HEK293 (cell line): ENCODE measurements at regions of chr6 and their contacts with region 1.

Region 1: GRCh38 chr6:121319112-121319553 is 15.1 kb downstream of the TBC1D32 start:
- H3K4me3 ChIP-seq: peak overlapping the region; percentile 2; the same call in 1 of the 2 replicates
- H3K27ac ChIP-seq: no peak overlapping the region
- H3K4me1 ChIP-seq: no peaks in the 10 kb centered on the region
- CTCF ChIP-seq: no peak

Region 2: DNA sequence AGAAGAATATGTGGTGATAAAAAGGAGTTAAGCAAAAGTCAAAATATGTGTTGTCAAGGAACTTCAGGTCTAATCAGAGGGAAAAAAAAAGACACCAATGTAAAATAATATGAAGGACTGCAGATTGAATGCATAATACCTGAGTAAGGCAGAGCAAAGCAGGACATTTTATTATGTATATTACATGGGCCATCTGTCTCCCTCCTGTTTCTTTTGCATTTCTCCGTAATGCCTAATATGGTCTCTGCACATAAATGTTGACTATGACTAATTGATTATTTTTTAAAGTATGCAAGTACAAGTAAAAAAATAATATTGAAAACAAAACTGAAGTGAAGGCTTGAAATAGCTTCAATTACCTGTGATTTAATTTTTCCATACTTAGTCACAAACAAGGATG is 1584.9 kb before region 1 on chr6:
- CTCF ChIA-PET with region 1: interaction called, 10 read pairs
- POLR2A ChIA-PET with region 1: no interaction called
- H3K4me3 ChIP-seq: no peak overlapping the region
- H3K27ac ChIP-seq: no peak overlapping the region
- H3K4me1 ChIP-seq: no peaks in the 10 kb centered on the region
- CTCF ChIP-seq: no peak

Region 3: GRCh38 chr6:121305957-121306607 is 13.1 kb before region 1 on chr6:
- CTCF ChIA-PET with region 1: interaction called, 18 read pairs
- POLR2A ChIA-PET with region 1: no interaction called
- H3K4me3 ChIP-seq: no peak overlapping the region
- H3K27ac ChIP-seq: no peak overlapping the region
- H3K4me1 ChIP-seq: no peaks in the 10 kb centered on the region
- CTCF ChIP-seq: 0 out of 2 replicates have a peak, but pooled peaks have one; percentile 22

Region 4: GRCh38 chr6:121393731-121394505 is 74.8 kb after region 1 on chr6:
- CTCF ChIA-PET with region 1: interaction called, 19 read pairs
- POLR2A ChIA-PET with region 1: no interaction called
- H3K4me3 ChIP-seq: no peak overlapping the region
- H3K27ac ChIP-seq: no peak overlapping the region
- H3K4me1 ChIP-seq: no peaks in the 10 kb centered on the region
- CTCF ChIP-seq: no peak

Region 5: GRCh38 chr6:121482004-121482693 is 163.0 kb after region 1 on chr6:
- CTCF ChIA-PET with region 1: no interaction called
- POLR2A ChIA-PET with region 1: no interaction called
- H3K4me3 ChIP-seq: no peak overlapping the region
- H3K27ac ChIP-seq: no peak overlapping the region
- H3K4me1 ChIP-seq: peaks cover 6% of the 10 kb centered on the region
- CTCF ChIP-seq: no peak